ENCODE measurements at regions of chr17 and their contacts with region 1.

Region 1: DNA sequence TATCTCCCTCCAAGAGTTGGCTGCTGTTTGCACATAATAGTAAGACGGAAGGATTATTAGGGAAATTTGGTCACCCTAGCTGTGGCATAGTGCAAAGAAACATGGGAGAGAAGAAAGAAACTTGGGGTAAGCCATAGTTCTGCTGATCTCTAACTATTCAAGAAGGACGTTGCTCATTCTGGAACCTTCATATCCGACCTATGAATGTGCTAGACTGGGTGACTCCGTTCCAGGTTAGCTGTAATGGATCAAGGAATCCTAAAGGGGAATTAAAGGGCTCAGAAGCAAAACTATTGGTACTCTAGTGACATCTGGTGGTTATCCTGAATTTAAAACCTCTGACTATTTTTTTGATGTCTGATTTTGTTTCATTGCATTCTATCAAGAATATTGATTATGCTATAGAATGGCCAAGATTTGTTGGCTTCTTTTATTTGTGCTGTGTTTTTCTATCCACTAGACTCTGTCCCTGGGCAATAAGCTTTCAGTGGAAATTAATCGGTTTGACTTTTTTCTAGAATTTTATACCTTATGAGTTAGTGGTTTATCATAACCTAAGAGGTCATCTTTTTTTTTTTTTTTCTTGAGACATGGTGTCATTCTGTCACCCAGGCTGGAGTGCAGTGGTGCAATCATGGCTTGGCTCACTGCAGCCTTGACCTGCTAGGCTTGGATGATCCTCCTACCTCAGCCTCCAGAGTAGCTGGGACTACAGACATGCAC is 19.5 kb downstream of the PCTP start:
- DNase-seq: peak; percentile 4
- H3K4me3 ChIP-seq: no peak overlapping the region
- CTCF ChIP-seq: peak; percentile 23

Region 2: DNA sequence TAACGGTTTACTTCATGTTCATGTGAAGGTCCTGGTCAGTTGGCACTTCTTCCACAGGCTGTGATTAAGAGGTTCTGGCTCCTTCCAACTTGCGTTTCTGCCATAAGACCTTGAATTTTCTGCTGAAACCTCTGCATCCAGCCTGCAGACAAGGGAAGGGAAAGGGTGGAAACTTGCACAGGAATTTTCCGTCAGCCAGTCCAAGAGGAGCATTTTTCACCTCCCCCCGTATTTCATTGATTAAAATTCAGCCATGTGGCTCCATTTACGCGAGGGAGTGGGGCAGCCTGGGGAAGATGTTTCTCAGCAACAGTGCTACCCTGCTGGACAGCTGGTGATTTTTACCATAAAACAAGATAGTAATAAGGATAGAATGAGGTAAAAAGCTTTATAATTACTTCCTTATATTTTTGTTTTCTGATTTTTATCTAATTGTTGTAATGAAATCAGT is 157.6 kb before region 1 on chr17:
- CTCF ChIA-PET with region 1: interaction called, 116 read pairs
- POLR2A ChIA-PET with region 1: no interaction called
- DNase-seq: no peak
- H3K4me3 ChIP-seq: no peak overlapping the region
- CTCF ChIP-seq: no peak

Region 3: GRCh38 chr17:55699181-55699860 is 71.0 kb before region 1 on chr17:
- CTCF ChIA-PET with region 1: no interaction called
- POLR2A ChIA-PET with region 1: no interaction called
- DNase-seq: no peak
- H3K4me3 ChIP-seq: no peak overlapping the region
- CTCF ChIP-seq: no peak

Region 4: DNA sequence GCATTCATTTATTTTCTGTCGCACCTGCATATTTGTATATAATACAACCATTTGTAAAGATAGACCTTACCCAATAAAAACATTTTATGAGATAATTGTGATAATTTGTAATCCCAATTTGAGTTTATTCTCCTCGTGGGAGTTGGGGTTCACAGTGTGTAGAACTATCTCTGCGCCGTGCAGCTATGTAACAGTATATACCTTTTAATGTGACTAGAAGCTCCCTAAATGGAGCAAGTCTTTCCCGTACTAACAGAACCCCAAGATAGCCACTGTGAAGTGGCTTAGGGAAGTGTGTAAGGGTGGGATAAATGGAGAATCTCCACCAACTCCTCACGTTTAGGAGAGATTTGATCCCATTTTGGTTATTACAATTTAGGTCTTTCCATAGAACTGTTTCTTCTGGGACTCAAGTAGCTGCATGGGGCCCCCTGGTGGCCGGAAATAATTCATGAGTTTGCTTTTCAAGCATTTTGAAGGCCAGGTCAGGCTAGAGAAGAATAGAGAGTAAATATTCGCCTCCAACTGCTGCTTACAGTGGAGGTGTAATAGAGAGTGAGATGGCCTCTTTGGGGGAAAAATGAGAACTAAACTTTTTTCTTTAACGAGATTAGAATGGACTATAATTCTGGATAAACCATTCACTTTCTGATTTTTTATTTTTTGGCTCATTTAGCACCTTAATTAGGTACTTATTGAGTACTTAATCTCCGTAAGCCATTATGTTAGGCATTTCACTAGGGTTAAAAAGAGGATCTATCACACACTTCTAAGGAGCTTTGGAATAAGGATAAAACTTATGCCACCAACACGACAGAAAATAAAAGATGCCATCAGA is 52.2 kb before region 1 on chr17:
- CTCF ChIA-PET with region 1: interaction called, 74 read pairs
- POLR2A ChIA-PET with region 1: interaction called, 3 read pairs
- DNase-seq: no peak
- H3K4me3 ChIP-seq: no peak overlapping the region
- CTCF ChIP-seq: peak; percentile 60

Region 5: DNA sequence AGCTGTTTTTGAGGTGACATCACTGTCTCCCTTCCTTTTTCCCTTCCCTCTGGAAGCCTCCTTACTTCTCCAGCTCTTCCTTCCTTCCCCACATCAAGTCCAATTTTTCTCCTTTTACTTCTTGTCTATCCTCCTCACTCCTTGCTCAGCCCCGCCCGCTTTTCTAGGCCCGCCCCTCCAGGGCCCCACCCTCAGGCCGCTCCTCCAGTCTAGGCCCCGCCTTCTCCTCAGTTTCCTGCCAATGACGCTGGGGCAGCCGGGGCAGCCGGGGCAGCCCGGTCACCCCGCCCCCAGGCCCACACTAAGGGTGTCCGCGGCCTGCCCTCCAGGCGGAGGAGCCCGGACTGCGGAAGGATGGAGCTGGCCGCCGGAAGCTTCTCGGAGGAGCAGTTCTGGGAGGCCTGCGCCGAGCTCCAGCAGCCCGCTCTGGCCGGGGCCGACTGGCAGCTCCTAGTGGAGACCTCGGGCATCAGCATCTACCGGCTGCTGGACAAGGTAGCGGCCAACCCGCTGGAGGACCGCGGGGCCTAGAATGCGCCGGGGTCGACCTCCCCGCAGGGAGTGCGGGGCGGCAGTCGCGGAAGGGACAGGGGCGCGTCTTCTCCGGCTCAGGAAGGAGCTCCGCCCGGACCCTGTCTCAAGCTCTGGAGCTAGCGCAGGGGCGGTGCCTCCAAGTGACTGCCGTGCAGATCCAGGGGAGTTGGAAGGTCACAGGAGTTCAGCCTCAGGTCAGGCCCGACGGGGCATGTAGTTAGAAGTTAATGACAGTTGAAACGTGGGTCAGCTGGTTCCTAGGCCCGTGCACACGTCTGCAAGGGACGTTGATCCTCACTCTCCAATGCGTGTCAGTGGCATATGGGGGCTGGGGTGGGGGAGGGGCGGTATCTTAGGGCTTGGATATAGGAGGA is 19.3 kb before region 1 on chr17 and contains the start of gene PCTP:
- CTCF ChIA-PET with region 1: interaction called, 37 read pairs
- POLR2A ChIA-PET with region 1: interaction called, 10 read pairs
- DNase-seq: no peak
- H3K4me3 ChIP-seq: peak within 1 kb of the TSS; percentile 84
- CTCF ChIP-seq: peak; percentile 70

Region 6: GRCh38 chr17:55783684-55784245 is 13.5 kb after region 1 on chr17:
- CTCF ChIA-PET with region 1: interaction called, 57 read pairs
- POLR2A ChIA-PET with region 1: no interaction called
- DNase-seq: no peak
- H3K4me3 ChIP-seq: no peak overlapping the region
- CTCF ChIP-seq: no peak

Measured in AG04449 (cell line).